Ascending aorta (tissue), 2 donors: ENCODE measurements at regions of chr17 and their contacts with region 1.

Region 1: DNA sequence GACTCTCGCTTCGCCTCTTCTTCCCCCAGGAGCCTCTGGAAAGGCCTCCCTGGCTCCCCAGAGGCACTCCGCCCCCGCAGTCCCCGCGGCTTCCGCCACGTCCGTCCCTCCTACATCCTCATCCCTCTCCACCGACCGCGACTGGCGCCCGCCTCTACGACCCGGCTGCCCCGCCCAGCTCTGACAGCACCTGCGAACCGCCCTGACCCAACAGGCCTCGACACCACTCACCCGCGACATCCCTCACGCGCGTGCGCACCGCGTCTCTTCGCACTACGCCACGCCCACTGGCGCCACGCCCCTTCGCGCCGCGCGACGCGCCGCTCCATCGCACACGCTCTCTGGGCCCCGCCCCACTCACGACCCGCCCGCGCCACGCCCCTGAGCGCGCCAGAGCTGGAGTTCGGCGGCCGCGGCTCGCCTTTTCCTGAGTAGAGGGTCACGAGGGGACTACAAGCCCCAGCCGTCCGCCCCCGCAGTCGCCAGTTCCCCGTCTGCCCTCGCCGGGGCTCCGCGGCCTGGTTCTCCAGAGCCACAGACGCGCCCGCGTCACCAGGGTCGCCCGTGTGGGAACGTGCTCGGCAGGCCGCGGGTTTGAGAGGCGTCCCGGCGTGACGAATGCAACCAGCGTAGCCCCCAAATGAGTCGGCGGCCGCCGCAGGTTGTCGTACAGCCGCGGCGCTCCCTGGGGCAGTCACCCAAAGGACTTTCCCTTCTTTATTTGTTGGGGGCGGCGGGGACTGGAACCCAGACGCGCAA is 56.2 kb upstream of the LRRC37A3 start:
- DNase-seq: peak; percentile 90 to 98
- H3K4me3 ChIP-seq: peak overlapping the region; percentile 81 to 88
- H3K27ac ChIP-seq: peak overlapping the region; percentile 96 to 99
- H3K4me1 ChIP-seq: peaks cover 3 to 5% of the 10 kb centered on the region in 2 donors
- H3K27me3 ChIP-seq: no peaks in the 10 kb centered on the region
- CTCF ChIP-seq: no peak

Region 2: DNA sequence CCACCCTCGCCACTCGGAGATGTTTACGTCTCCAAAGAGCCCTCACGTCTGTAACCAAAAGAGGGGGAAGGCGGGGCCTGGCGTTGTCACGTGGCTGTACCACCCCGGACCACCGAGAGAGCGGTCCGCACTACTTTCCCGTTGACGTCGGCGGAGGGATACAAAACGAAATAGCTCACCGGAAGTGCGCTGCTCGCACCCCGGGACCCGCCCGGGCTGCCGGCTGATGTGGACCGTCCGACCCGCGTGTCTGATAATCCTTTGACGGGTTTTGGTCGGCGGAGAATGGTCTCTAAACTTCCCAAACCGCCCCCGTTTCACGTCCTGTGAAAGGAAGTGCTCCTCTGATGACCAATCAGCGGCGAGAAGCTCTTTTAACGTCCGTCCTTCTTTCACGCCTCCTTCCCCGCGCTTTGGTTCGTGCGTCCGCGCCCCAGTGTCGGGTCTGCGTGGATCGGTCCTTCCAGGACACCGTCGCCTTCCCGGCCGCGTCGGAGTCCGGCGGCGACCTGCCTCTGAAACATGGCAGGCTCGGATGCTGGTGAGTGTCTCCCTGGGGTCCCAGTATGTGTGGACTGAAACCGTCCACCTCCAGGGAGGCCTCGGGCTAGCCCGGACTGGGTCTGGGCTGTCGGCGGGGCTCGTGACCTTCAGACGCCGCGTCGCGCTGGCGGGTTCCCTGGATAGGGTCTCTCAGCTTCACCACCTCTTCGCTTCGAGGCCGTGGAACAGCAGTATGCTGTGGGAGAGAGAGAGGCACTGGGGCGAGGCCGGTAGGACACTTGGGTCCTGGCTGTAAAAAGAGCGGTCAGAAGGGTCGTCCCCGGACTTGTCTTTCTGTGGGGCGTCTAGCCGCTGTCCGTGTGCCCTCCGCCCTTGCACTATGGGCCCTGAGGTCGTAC is 468.7 kb before region 1 on chr17 and contains the start of gene CEP95:
- intact Hi-C with region 1: loop called (anchors 10 kb)
- DNase-seq: peak; percentile 76 to 98
- H3K4me3 ChIP-seq: peak within 1 kb of the TSS; percentile 91 to 99
- H3K27ac ChIP-seq: peak within 1 kb of the TSS; percentile 99 to 100
- H3K4me1 ChIP-seq: peaks cover 10 to 41% of the 10 kb centered on the region in 2 donors
- H3K27me3 ChIP-seq: no peaks in the 10 kb centered on the region
- CTCF ChIP-seq: peak in 1 of 3 experiments; percentile 47
- total RNA-seq, gene CEP95: 6.9 TPM

Region 3: GRCh38 chr17:64920026-64920418 is 55.5 kb before region 1 on chr17:
- intact Hi-C with region 1: loop called (anchors 2 kb)
- DNase-seq: peak in 1 of 2 donors; percentile 66
- H3K4me3 ChIP-seq: peak overlapping the region; percentile 72 to 98
- H3K27ac ChIP-seq: peak overlapping the region; percentile 89 to 93
- H3K4me1 ChIP-seq: no peaks in the 10 kb centered on the region
- H3K27me3 ChIP-seq: no peaks in the 10 kb centered on the region
- CTCF ChIP-seq: no peak

Region 4: DNA sequence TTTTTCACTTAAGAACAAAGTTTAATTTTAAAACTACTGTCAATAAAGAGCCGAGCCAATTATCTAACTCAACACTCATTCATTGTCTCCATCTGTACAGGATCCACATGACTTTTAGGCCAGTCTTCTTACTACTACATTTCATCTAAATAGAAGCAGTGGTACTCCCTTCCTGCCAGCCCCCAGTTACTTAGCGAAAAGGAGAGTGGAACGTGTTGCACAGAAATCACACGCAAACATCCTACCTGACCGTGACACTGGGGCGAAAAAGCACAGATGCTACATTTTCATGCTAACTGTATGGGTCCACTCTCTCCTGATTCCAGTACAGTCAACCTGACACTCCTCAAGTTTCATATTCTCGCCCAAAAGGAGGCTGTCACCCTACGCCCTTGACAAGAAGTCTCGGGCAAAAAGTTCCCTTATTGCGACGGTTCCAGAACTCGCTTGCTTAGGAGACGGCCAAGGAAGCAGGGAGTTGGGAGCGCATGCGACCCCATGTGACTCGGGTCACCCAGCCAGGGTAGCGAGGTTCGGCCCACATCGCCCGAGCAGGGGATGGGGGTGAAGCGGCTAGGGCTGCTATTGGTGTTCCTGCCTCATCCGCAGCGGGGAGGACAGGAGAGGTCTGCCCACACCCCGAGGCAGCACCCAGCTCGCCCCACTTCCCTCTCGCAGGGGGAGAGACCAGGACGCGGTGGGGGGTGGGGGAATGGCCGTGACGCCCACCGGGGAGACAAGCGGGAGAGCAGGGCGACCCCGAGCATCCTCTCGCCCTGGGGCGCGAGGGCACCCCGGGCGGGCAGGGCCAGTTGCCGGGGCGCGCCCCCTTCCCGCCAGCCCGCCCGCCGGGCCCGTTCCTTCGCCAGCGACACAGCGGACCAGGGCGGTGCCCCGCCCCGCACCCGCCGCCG is 80.1 kb after region 1 on chr17:
- intact Hi-C with region 1: loop called (anchors 1 kb)
- DNase-seq: peak; percentile 27 to 80
- H3K4me3 ChIP-seq: peak overlapping the region; percentile 87 to 92
- H3K27ac ChIP-seq: peak overlapping the region; percentile 97 to 98
- H3K4me1 ChIP-seq: peaks cover 0 to 30% of the 10 kb centered on the region in 2 donors
- H3K27me3 ChIP-seq: no peaks in the 10 kb centered on the region
- CTCF ChIP-seq: no peak

Region 5: DNA sequence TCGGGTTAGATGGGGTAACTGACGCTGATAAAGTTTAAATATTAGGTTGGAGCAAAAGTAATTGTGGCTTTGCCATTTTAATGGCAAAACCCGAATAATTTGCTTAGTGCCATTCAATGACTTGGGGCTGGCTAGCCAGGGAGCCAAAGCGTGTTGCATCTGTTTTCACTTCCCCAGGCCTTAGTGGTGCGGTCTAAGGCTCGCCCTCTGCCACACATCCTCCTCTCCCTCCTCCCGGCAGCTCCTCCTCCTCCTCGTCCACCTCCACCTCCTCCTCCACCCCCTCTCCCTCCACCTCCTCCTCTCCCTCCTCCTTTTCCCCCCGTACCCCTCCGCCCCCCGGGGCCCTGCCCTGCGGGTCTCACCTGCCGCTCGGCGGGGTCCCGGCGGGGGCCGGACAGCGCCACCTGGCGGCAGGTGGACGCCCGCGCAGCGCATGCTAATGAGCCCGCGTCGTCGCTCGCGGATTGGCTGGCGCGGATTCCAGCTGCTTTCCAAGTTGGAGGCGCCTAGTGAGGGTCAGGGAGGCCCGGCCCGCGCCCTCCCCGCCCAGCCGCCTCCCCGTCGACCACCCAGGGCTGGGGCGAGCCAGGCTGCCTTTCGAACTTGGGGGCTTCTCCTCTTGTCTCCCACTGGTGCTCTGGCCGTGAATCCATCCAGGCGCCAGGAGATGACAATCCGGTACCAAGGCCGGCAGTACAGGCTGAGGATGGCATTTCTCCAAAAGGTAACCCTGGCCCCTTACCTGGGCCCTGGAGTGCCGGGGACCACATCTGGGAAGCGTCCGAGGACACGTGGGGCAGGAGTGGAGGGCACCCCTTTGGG is 125.0 kb after region 1 on chr17:
- intact Hi-C with region 1: loop called (anchors 5 kb)
- DNase-seq: peak; percentile 21 to 92
- H3K4me3 ChIP-seq: peak overlapping the region; percentile 55 to 64
- H3K27ac ChIP-seq: peak overlapping the region; percentile 51 to 58
- H3K4me1 ChIP-seq: peaks cover 0 to 4% of the 10 kb centered on the region in 2 donors
- H3K27me3 ChIP-seq: no peaks in the 10 kb centered on the region
- CTCF ChIP-seq: peak; percentile 89 to 99 (median 95)

Region 6: GRCh38 chr17:65463242-65463641 is 487.7 kb after region 1 on chr17:
- intact Hi-C with region 1: loop called (anchors 10 kb)
- DNase-seq: peak; percentile 71 to 93
- H3K4me3 ChIP-seq: no peak overlapping the region
- H3K27ac ChIP-seq: peak overlapping the region; percentile 68 to 73
- H3K4me1 ChIP-seq: peaks cover 4 to 18% of the 10 kb centered on the region in 2 donors
- H3K27me3 ChIP-seq: no peaks in the 10 kb centered on the region
- CTCF ChIP-seq: no peak

Region 7: GRCh38 chr17:65561394-65562205 is 586.1 kb after region 1 on chr17 and contains the start of gene AXIN2:
- intact Hi-C with region 1: loop called (anchors 5 kb)
- DNase-seq: peak; percentile 59 to 94
- H3K4me3 ChIP-seq: peak within 1 kb of the TSS in 1 of 2 donors; percentile 97
- H3K27ac ChIP-seq: peak within 1 kb of the TSS; percentile 90 to 94
- H3K4me1 ChIP-seq: peaks cover 0 to 11% of the 10 kb centered on the region in 2 donors
- H3K27me3 ChIP-seq: no peaks in the 10 kb centered on the region
- CTCF ChIP-seq: peak; percentile 11 to 32 (median 12)
- total RNA-seq, gene AXIN2: 27.5 TPM